WTC11 (cell line): ENCODE measurements at regions of chr3 and their contacts with region 1.

Region 1: DNA sequence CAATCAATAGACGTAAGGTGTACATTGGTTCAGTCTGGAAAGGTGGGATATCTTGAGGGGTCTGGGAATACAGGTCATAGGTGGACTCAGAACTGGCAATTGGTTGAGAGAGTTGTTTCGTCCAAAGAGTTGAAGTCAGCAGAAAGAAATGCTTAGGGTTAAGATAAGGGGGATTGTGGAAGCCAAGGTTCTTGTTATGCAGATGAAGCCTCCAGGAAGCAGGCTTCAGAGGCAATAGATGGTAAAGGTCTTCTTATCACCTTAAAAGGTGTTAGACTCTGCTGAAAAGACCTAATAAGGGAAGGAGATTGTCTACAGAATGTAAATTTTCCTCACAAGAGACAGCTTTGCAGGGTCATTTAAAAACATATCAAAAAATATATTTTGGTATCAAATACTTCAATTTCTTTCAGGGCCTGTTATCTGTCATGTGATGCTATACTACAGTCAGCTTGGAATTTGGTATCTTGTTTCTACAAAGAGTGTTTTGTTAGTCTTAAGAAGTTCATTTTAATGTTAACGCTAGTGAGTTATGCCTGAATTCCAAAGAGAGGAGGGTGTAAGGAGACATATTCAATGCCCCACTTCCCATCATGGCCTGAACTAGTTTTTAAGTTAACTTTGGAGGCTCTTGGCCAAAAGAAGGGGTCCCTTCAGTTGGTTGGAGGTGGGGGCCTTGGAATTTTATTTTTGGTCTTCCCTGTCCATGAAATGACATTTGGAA is 378.2 kb upstream of the ROBO2 start:
- DNase-seq: no peak
- ATAC-seq: peak; percentile 93
- H3K4me3 Mint-ChIP-seq: peak overlapping the region; percentile 24
- H3K27ac Mint-ChIP-seq: peak overlapping the region; percentile 96
- H3K4me1 Mint-ChIP-seq: peaks cover 55% of the 10 kb centered on the region
- H3K27me3 Mint-ChIP-seq: peaks cover under 1% of the 10 kb centered on the region
- CTCF ChIP-seq: no peak

Region 2: GRCh38 chr3:76509179-76509830 is 152.4 kb before region 1 on chr3:
- CTCF ChIA-PET with region 1: no interaction called
- POLR2A ChIA-PET with region 1: no interaction called
- DNase-seq: no peak
- ATAC-seq: no peak
- H3K4me3 Mint-ChIP-seq: no peak overlapping the region
- H3K27ac Mint-ChIP-seq: no peak overlapping the region
- H3K4me1 Mint-ChIP-seq: no peaks in the 10 kb centered on the region
- H3K27me3 Mint-ChIP-seq: no peaks in the 10 kb centered on the region
- CTCF ChIP-seq: no peak

Region 3: DNA sequence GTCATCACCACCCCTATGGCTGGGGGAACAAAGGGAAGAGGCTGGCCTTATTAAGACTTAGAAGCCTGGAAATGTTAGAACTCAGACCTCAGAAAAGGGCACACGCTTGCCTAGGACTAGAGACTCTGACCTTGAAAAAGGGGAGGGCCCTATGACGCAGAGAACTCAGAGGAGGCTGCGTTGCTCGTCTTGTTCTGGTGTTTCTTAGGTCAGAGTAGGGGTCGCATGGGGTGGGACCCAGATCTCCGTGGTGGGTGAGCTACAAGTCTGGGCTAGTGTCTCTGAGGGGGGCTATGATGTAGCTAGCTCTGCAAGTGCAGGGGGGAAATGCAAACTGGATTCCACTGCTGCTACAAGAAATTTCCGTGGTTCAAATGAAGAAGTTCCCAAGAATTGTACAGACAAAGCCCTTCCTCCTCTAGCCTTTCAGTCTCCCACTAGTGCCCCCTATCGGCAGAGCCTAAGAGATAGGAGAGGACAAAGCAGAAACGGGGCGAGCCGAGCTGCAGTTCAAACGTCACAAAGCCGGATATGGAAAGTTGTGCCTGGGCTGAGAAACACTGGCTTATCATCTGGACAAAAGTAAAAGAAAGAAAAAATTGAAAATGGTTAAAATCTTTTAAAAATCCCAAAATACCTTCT is 14.6 kb before region 1 on chr3:
- CTCF ChIA-PET with region 1: interaction called, 12 read pairs
- POLR2A ChIA-PET with region 1: no interaction called
- DNase-seq: peak; percentile 79
- ATAC-seq: peak; percentile 92
- H3K4me3 Mint-ChIP-seq: no peak overlapping the region
- H3K27ac Mint-ChIP-seq: no peak overlapping the region
- H3K4me1 Mint-ChIP-seq: peaks cover 18% of the 10 kb centered on the region
- H3K27me3 Mint-ChIP-seq: no peaks in the 10 kb centered on the region
- CTCF ChIP-seq: peak; percentile 63

Region 4: DNA sequence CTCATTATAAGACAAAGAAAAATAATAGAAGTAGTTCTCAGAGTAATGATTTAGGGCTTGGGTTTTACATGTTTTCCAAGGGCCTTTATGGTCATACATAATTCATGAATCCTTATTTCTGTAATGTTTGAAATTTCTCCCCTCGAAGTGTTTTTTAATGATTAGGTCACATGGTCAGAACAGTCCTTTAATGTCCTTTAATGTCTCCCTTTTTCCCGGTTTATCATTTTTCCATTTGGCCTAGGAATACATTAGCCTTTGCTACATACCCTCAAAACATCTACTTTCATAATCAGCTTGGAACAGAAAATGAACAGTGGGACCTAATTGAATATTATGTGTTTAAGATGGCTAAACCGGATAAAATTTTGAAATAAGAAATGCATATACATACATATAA is 218.3 kb after region 1 on chr3:
- CTCF ChIA-PET with region 1: no interaction called
- POLR2A ChIA-PET with region 1: no interaction called
- DNase-seq: no peak
- ATAC-seq: no peak
- H3K4me3 Mint-ChIP-seq: no peak overlapping the region
- H3K27ac Mint-ChIP-seq: no peak overlapping the region
- H3K4me1 Mint-ChIP-seq: no peaks in the 10 kb centered on the region
- H3K27me3 Mint-ChIP-seq: no peaks in the 10 kb centered on the region
- CTCF ChIP-seq: no peak